ENCODE measurements at regions of chr16 and their contacts with region 1.

Region 1: DNA sequence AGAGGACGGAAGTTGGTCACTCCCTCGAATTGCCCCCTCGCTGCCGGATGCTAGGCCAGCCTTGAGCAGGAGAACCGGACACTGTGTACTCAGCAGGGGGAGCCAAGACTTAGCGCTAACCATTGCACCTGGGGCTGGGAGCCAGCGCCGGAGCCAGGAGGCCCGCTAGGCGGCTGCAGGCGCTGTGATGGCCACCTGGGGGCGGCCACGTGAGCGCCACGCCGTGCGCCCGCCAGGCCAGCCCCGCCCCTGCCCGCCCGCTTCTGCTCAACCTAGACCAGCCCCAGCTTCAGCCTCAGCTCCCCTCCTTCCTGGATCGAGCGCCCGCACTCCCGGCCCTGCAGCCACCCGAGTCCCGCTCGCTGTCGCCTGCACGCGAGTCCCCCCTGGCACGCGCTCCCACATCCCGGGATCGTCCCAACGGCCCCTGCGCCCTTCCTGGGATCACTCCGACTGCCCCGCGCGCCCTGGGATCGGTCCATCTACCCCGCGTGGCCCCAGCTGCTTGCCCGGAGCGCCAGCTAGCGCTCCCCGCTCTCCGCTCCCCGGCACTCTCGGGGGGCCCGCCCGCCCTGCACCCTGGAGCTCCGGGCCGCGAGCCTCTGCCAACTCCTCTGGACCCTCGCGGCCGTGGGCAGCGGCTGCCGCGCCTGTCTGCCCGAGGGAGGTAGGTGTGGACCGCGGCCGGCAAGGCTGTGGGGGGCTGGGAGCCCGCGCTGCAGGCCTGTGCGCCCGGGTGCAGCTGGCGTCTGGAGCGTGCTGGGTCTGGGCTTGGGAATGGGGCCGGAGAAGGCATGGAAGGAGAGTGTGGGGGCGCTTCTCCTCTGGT is at the start of gene EEF2K:
- DNase-seq: peak; percentile 60 to 92 (median 76)
- ATAC-seq: peak; percentile 91
- H3K4me3 ChIP-seq: peak within 1 kb of the TSS; percentile 85
- H3K4me3 Mint-ChIP-seq: peak within 1 kb of the TSS; percentile 96
- H3K27ac ChIP-seq: peak within 1 kb of the TSS in 1 of 2 donors; percentile 51
- H3K27ac Mint-ChIP-seq: peak within 1 kb of the TSS; percentile 79
- H3K4me1 ChIP-seq: peaks cover 26% of the 10 kb centered on the region
- H3K4me1 Mint-ChIP-seq: peaks cover 36% of the 10 kb centered on the region
- H3K27me3 ChIP-seq: no peaks in the 10 kb centered on the region
- H3K27me3 Mint-ChIP-seq: no peaks in the 10 kb centered on the region
- CTCF ChIP-seq: peak; percentile 81
- total RNA-seq, gene EEF2K: 10.1 to 13.2 TPM

Region 2: DNA sequence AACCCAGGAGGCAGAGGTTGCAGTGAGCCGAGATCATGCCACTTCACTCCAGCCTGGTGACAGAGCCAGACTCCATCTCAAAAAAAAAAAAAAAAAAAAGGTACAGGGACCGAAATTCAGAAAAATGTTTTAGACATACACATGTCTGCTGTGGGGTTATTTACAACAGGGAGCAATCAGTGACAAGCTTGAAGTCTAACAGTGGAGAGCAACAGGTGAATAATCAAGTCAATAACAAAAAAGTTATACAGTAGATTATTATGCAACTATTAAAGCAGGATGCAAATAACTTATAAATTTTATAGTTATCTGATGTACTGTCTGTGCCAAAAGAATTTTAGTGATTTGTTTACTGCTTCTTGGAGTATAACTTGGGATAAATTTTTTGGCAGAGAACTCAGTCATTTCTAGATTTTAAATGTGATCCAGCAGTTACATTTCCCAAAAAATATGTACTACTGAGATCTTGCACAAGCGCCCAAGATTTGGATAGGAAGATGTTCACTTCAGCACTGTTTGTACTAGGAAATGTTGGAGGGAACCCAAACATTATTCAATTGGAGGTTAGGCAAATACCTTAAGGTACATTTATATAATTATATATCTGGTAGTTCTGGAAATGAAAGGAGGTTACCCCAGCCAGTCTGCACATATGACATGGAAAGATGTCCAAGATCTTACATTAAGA is 33.9 kb after region 1 on chr16:
- CTCF ChIA-PET with region 1: no interaction called
- POLR2A ChIA-PET with region 1: interaction called, 9 read pairs
- intact Hi-C with region 1: loop called in 1 of 2 experiments (anchors 2 kb)
- DNase-seq: no peak
- ATAC-seq: no peak
- H3K4me3 ChIP-seq: no peak overlapping the region
- H3K4me3 Mint-ChIP-seq: peak overlapping the region; percentile 11
- H3K27ac ChIP-seq: no peak overlapping the region
- H3K27ac Mint-ChIP-seq: peak overlapping the region; percentile 87
- H3K4me1 ChIP-seq: peaks cover 39% of the 10 kb centered on the region
- H3K4me1 Mint-ChIP-seq: peaks cover 34% of the 10 kb centered on the region
- H3K27me3 ChIP-seq: no peaks in the 10 kb centered on the region
- H3K27me3 Mint-ChIP-seq: no peaks in the 10 kb centered on the region
- CTCF ChIP-seq: no peak